ENCODE measurements at regions of chr7 and their contacts with region 1.

Region 1: DNA sequence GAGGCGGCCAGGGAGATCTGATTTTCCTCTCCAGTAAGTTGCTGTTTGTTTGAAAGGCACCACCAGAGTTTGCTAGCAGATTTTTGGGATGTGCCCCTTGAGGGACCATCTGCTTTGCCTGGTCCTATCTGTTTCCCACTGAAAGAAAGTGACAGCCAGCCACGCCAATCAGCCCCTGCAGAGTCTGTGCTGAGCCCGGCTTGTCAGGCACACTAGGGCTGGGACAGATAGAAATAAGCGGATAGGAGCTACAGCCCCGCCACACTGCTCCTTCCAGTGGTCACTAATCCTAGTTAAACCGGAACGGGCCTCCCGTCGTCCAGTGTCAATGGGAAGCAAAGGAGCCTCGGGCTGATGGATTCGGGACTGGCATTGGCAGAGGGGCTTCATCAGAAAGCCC is 161.9 kb upstream of the PRR15 start:
- DNase-seq: peak in 1 of 2 donors; percentile 77
- H3K4me3 ChIP-seq: no peak overlapping the region
- H3K27ac ChIP-seq: no peak overlapping the region
- H3K4me1 ChIP-seq: no peaks in the 10 kb centered on the region
- H3K27me3 ChIP-seq: no peaks in the 10 kb centered on the region
- CTCF ChIP-seq: no peak
- POLR2A ChIP-seq: no peak

Region 2: GRCh38 chr7:29113384-29114103 is 288.2 kb before region 1 on chr7:
- intact Hi-C with region 1: loop called (anchors 5 kb)
- DNase-seq: no peak
- H3K4me3 ChIP-seq: no peak overlapping the region
- H3K27ac ChIP-seq: no peak overlapping the region
- H3K4me1 ChIP-seq: peaks cover 5% of the 10 kb centered on the region
- H3K27me3 ChIP-seq: no peaks in the 10 kb centered on the region
- CTCF ChIP-seq: no peak
- POLR2A ChIP-seq: no peak

Region 3: GRCh38 chr7:29360633-29361625 is 40.8 kb before region 1 on chr7:
- intact Hi-C with region 1: no loop called
- DNase-seq: no peak
- H3K4me3 ChIP-seq: no peak overlapping the region
- H3K27ac ChIP-seq: no peak overlapping the region
- H3K4me1 ChIP-seq: peaks cover 5% of the 10 kb centered on the region
- H3K27me3 ChIP-seq: no peaks in the 10 kb centered on the region
- CTCF ChIP-seq: no peak
- POLR2A ChIP-seq: no peak

Measured in vagina (tissue), 2 donors.